PC-3 (cell line): ENCODE measurements at regions of chr14 and their contacts with region 1.

Region 1: GRCh38 chr14:95123891-95124579 is 33.3 kb downstream of the DICER1 start:
- DNase-seq: no peak
- ATAC-seq: no peak
- H3K4me3 ChIP-seq: no peak overlapping the region
- H3K27ac ChIP-seq: no peak overlapping the region
- H3K4me1 ChIP-seq: peaks cover 6% of the 10 kb centered on the region; the same call in 1 of the 2 replicates
- H3K27me3 ChIP-seq: no peaks in the 10 kb centered on the region
- CTCF ChIP-seq: no peak

Region 2: DNA sequence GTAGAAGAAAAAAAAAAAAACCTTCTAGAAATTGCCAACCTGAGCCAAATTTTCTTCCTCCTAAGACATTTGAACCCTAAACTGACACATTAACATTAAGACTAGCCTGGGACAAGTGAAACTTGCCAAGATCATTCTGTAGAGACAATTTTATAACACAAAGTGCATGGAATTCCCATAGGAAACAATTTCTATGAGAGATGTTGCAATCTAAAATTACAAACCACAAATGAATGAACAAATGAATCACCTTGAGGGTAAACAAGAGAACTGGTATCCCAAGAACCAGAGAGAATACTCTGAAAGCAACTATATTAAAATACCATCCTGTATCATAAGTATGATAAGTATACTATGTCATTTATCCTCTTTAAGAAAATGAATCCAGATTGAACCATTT is 132.0 kb before region 1 on chr14:
- CTCF ChIA-PET with region 1: no interaction called
- POLR2A ChIA-PET with region 1: no interaction called
- intact Hi-C with region 1: no loop called
- DNase-seq: peak; percentile 63
- ATAC-seq: no peak
- H3K4me3 ChIP-seq: no peak overlapping the region
- H3K27ac ChIP-seq: no peak overlapping the region
- H3K4me1 ChIP-seq: peaks cover 7% of the 10 kb centered on the region; the same call in 1 of the 2 replicates
- H3K27me3 ChIP-seq: peaks cover 14% of the 10 kb centered on the region; the same call in 1 of the 2 replicates
- CTCF ChIP-seq: no peak

Region 3: GRCh38 chr14:95137804-95138167 is 13.8 kb after region 1 on chr14:
- CTCF ChIA-PET with region 1: no interaction called
- POLR2A ChIA-PET with region 1: no interaction called
- intact Hi-C with region 1: loop called (anchors 2 kb)
- DNase-seq: peak; percentile 6
- ATAC-seq: peak; percentile 44
- H3K4me3 ChIP-seq: no peak overlapping the region
- H3K27ac ChIP-seq: no peak overlapping the region
- H3K4me1 ChIP-seq: peaks cover 8% of the 10 kb centered on the region; the same call in 1 of the 2 replicates
- H3K27me3 ChIP-seq: no peaks in the 10 kb centered on the region
- CTCF ChIP-seq: no peak